GM12878 (cell line): ENCODE measurements at regions of chr1 and their contacts with region 1.

Region 1: GRCh38 chr1:157580179-157580827 is 17.6 kb downstream of the FCRL4 start:
- DNase-seq: peak; percentile 53
- ATAC-seq: peak; percentile 77
- H3K4me3 ChIP-seq: no peak overlapping the region
- H3K27ac ChIP-seq: no peak overlapping the region
- H3K4me1 ChIP-seq: peaks cover 17% of the 10 kb centered on the region
- H3K27me3 ChIP-seq: peaks cover 0 to 10% of the 10 kb centered on the region in 2 experiments; a peak in 1 of 4 replicates
- CTCF ChIP-seq: peak; percentile 71 to 81 (median 78)
- EP300 ChIP-seq: no peak
- POLR2A ChIP-seq: no peak
- RAD21 ChIP-seq: peak; percentile 88

Region 2: DNA sequence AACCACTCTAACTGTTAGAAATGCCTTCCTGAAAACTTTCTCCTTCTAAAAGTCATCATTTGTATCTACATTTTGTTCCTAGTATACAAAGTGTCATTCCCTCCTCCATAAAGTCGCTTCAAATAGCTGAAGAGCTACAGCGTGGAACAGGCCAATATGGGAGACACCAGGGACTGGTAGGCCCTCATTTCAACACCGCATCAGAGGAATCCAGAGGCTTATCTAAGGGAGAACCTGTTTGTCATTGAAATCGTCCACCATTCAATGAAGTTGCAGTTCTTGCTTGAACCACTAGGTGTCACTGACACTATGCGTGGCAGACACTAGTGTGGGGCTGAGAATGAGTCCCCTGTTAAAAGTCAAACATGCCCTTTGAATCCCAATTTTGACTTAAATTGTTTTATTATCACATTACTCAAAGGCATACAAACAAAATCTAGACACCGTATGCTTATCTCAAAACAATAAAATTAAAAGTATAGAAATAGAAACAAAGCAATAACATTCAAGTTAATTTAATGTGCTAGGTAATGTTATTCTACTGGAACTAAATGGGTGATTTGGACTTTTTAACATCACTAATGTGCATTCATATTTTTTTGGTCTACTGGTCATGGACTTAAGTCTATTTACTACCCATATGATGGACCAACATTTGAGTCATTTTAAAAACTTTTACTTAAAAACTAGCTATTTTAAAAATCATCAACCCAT is 210.3 kb before region 1 on chr1:
- CTCF ChIA-PET with region 1: interaction called, 10 read pairs
- POLR2A ChIA-PET with region 1: no interaction called
- RAD21 ChIA-PET with region 1: interaction called, 5 read pairs
- SMC1A ChIA-PET with region 1: interaction called, 7 read pairs
- in situ Hi-C with region 1: no loop called
- intact Hi-C with region 1: no loop called
- DNase-seq: peak; percentile 30
- ATAC-seq: peak; percentile 93
- H3K4me3 ChIP-seq: no peak overlapping the region
- H3K27ac ChIP-seq: no peak overlapping the region
- H3K4me1 ChIP-seq: no peaks in the 10 kb centered on the region
- H3K27me3 ChIP-seq: no peaks in the 10 kb centered on the region
- CTCF ChIP-seq: peak; percentile 68 to 87 (median 83)
- EP300 ChIP-seq: no peak
- POLR2A ChIP-seq: no peak
- RAD21 ChIP-seq: peak; percentile 74

Region 3: GRCh38 chr1:157466011-157466410 is 114.3 kb before region 1 on chr1:
- CTCF ChIA-PET with region 1: no interaction called
- POLR2A ChIA-PET with region 1: no interaction called
- RAD21 ChIA-PET with region 1: no interaction called
- SMC1A ChIA-PET with region 1: no interaction called
- in situ Hi-C with region 1: no loop called
- intact Hi-C with region 1: no loop called
- DNase-seq: no peak
- ATAC-seq: no peak
- H3K4me3 ChIP-seq: no peak overlapping the region
- H3K27ac ChIP-seq: no peak overlapping the region
- H3K4me1 ChIP-seq: no peaks in the 10 kb centered on the region
- H3K27me3 ChIP-seq: no peaks in the 10 kb centered on the region
- CTCF ChIP-seq: no peak
- EP300 ChIP-seq: no peak
- POLR2A ChIP-seq: no peak
- RAD21 ChIP-seq: no peak

Region 4: GRCh38 chr1:157512036-157512969 is 68.0 kb before region 1 on chr1:
- CTCF ChIA-PET with region 1: interaction called, 66 read pairs
- POLR2A ChIA-PET with region 1: interaction called, 3 read pairs
- RAD21 ChIA-PET with region 1: interaction called, 7 read pairs
- SMC1A ChIA-PET with region 1: interaction called, 35 read pairs
- in situ Hi-C with region 1: no loop called
- intact Hi-C with region 1: no loop called
- DNase-seq: peak; percentile 68
- ATAC-seq: peak; percentile 74
- H3K4me3 ChIP-seq: no peak overlapping the region
- H3K27ac ChIP-seq: peak overlapping the region; percentile 88
- H3K4me1 ChIP-seq: peaks cover 50% of the 10 kb centered on the region
- H3K27me3 ChIP-seq: no peaks in the 10 kb centered on the region
- CTCF ChIP-seq: no peak
- EP300 ChIP-seq: peak; percentile 89 to 95
- POLR2A ChIP-seq: no peak
- RAD21 ChIP-seq: no peak

Region 5: DNA sequence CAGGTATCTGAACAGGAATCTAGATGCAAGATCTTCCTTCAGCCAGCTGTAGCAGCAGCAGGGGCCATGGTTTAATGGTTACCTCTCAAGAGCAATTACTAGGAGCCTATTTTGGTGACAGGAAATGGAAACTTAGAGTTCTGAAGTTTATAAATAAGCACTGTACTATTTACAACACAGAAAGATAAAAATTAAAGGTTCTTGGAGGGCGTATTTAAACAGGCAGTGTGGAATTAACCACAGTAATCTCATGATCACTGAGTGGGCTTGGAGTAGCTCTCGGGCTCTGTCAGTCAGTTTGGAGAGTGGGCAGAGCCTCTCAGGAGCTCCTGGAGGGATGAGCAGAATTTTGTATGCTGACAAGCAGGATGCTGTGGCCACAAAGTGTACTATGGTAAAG is 17.8 kb before region 1 on chr1:
- CTCF ChIA-PET with region 1: interaction called, 78 read pairs
- POLR2A ChIA-PET with region 1: interaction called, 6 read pairs
- RAD21 ChIA-PET with region 1: interaction called, 14 read pairs
- SMC1A ChIA-PET with region 1: interaction called, 49 read pairs
- in situ Hi-C with region 1: no loop called
- intact Hi-C with region 1: no loop called
- DNase-seq: peak; percentile 63
- ATAC-seq: peak; percentile 83
- H3K4me3 ChIP-seq: peak overlapping the region; percentile 40; the same call in 1 of the 2 replicates
- H3K27ac ChIP-seq: 0 out of 2 replicates have a peak overlapping the region, but pooled peaks have one; percentile 1
- H3K4me1 ChIP-seq: peaks cover 23% of the 10 kb centered on the region
- H3K27me3 ChIP-seq: no peaks in the 10 kb centered on the region
- CTCF ChIP-seq: no peak
- EP300 ChIP-seq: peak; percentile 47 to 83; a peak in 1 of 4 replicates
- POLR2A ChIP-seq: no peak
- RAD21 ChIP-seq: no peak

Region 6: DNA sequence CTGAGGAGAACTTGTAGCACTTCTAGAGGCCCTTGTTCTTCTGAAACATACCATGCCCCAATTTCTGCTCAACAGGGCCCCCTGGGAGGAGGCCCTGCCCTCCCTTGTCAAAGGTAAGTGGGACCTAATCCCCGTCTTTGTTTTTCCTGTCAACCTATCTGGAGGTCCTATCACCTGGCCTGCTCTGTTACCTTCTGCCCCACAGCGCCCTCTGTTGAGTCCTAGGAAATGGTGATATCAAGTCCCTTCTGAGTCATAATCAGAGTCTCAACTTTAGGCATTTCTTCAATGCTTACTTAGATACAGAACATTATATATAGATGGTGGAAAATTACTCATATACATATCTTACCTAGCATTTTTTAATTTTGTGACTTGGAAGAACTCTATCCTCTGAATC is 45.8 kb after region 1 on chr1:
- CTCF ChIA-PET with region 1: interaction called, 223 read pairs
- POLR2A ChIA-PET with region 1: no interaction called
- RAD21 ChIA-PET with region 1: interaction called, 34 read pairs
- SMC1A ChIA-PET with region 1: interaction called, 38 read pairs
- in situ Hi-C with region 1: no loop called
- intact Hi-C with region 1: loop called (anchors 1 kb)
- DNase-seq: peak; percentile 12
- ATAC-seq: peak; percentile 72
- H3K4me3 ChIP-seq: no peak overlapping the region
- H3K27ac ChIP-seq: no peak overlapping the region
- H3K4me1 ChIP-seq: no peaks in the 10 kb centered on the region
- H3K27me3 ChIP-seq: peaks cover 4 to 13% of the 10 kb centered on the region in 2 experiments; a peak in 2 of 4 replicates
- CTCF ChIP-seq: peak; percentile 45 to 71 (median 59); a peak in 5 of 6 replicates
- EP300 ChIP-seq: no peak
- POLR2A ChIP-seq: no peak
- RAD21 ChIP-seq: peak; percentile 85

Region 7: GRCh38 chr1:157773493-157774350 is 193.4 kb after region 1 on chr1:
- CTCF ChIA-PET with region 1: interaction called, 68 read pairs
- POLR2A ChIA-PET with region 1: no interaction called
- RAD21 ChIA-PET with region 1: interaction called, 16 read pairs
- SMC1A ChIA-PET with region 1: interaction called, 23 read pairs
- in situ Hi-C with region 1: no loop called
- intact Hi-C with region 1: loop called (anchors 1 kb)
- DNase-seq: no peak
- ATAC-seq: peak; percentile 89
- H3K4me3 ChIP-seq: no peak overlapping the region
- H3K27ac ChIP-seq: no peak overlapping the region
- H3K4me1 ChIP-seq: peaks cover 15% of the 10 kb centered on the region
- H3K27me3 ChIP-seq: peaks cover 3 to 7% of the 10 kb centered on the region in 2 experiments; a peak in 1 of 4 replicates
- CTCF ChIP-seq: peak; percentile 56 to 67 (median 63)
- EP300 ChIP-seq: no peak
- POLR2A ChIP-seq: no peak
- RAD21 ChIP-seq: peak; percentile 89